Activated B cell treated with CpG ODN at 0.5 μM for 24 hours (primary cell): ENCODE measurements at regions of chr1 and their contacts with region 1.

Region 1: GRCh38 chr1:224329842-224330753 is at the start of gene NVL:
- DNase-seq: peak; percentile 79
- ATAC-seq: peak; percentile 84
- H3K4me3 Mint-ChIP-seq: peak within 1 kb of the TSS; percentile 91
- H3K27ac Mint-ChIP-seq: peak within 1 kb of the TSS; percentile 99
- H3K4me1 Mint-ChIP-seq: peaks cover 46% of the 10 kb centered on the region
- H3K27me3 Mint-ChIP-seq: no peaks in the 10 kb centered on the region
- CTCF ChIP-seq: no peak
- total RNA-seq, gene NVL: 43.7 and 44.4 TPM in 2 replicates

Region 2: DNA sequence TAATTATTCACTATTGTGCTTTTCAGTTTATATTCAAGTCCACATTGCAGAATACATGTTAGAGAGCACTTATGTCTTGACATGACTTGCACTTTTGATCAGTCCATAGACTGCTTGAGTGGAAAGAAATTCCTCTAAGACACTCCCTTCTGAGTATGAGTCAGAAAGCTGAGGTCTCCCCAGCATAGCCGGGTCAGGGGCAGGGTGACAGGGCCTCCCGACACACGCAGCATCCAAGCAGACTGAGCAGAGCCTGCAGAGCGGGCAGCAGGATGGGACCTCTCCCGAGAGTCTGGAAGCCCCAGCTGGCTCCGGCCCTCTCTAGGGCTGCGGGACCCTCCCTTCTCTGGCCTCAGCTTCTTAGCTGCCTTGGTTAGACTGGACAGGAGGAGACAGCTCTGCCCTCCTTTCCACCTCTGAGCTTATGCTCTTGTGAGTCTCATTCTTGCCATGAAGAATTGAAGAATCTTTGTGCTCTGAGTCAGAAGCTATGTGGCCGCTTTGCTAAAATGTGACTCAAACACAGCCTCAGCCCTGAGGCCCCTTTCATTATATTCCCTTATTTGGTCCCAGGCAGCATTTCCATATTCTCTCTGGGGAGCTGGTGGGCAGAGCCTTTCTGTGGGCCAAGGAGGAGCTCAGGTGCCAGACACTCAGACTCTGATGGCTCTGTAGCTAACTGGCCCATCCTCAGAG is 629.0 kb before region 1 on chr1:
- CTCF ChIA-PET with region 1: interaction called, 4 read pairs
- POLR2A ChIA-PET with region 1: no interaction called
- intact Hi-C with region 1: loop called (anchors 1 kb)
- DNase-seq: no peak
- ATAC-seq: no peak
- H3K4me3 Mint-ChIP-seq: no peak overlapping the region
- H3K27ac Mint-ChIP-seq: no peak overlapping the region
- H3K4me1 Mint-ChIP-seq: peaks cover 9% of the 10 kb centered on the region
- H3K27me3 Mint-ChIP-seq: peaks cover 13% of the 10 kb centered on the region
- CTCF ChIP-seq: no peak

Region 3: DNA sequence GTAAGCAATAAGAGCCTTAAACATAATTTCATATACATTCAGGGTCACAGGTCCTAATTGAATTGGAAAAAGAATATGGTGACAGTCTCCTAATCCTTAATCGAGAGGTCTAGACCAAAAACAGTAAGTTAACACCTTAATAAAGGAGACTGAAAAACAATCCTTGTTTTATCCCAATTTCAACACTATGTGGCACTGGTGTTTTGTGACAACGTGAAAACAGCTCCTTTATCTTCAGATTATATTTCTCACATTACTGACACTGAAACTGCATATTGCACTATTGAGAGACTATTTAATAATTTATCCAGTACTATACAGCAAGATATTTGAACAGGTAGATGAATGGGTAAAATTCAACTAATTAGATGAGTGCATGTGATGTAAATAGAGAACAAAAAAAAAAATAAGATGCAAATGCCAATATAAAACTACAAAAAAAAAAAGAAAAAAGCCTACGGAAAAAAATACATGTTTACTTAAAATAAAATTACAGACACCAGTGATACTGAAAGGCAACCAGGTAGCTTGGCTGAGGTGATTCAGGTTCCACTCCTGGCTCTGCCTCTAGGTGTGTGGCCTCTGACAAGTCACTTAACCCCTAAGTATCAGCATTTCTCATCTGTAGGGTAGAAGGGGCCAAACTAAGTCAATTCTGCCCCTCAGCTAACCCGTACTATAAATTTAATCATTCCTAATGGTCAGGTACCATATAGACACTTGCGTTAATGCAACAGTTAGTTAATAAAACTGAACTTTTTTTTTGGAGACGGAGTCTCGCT is 518.3 kb before region 1 on chr1:
- CTCF ChIA-PET with region 1: interaction called, 5 read pairs
- POLR2A ChIA-PET with region 1: no interaction called
- intact Hi-C with region 1: loop called (anchors 1 kb)
- DNase-seq: no peak
- ATAC-seq: peak; percentile 42
- H3K4me3 Mint-ChIP-seq: no peak overlapping the region
- H3K27ac Mint-ChIP-seq: no peak overlapping the region
- H3K4me1 Mint-ChIP-seq: peaks cover 13% of the 10 kb centered on the region
- H3K27me3 Mint-ChIP-seq: no peaks in the 10 kb centered on the region
- CTCF ChIP-seq: no peak

Region 4: DNA sequence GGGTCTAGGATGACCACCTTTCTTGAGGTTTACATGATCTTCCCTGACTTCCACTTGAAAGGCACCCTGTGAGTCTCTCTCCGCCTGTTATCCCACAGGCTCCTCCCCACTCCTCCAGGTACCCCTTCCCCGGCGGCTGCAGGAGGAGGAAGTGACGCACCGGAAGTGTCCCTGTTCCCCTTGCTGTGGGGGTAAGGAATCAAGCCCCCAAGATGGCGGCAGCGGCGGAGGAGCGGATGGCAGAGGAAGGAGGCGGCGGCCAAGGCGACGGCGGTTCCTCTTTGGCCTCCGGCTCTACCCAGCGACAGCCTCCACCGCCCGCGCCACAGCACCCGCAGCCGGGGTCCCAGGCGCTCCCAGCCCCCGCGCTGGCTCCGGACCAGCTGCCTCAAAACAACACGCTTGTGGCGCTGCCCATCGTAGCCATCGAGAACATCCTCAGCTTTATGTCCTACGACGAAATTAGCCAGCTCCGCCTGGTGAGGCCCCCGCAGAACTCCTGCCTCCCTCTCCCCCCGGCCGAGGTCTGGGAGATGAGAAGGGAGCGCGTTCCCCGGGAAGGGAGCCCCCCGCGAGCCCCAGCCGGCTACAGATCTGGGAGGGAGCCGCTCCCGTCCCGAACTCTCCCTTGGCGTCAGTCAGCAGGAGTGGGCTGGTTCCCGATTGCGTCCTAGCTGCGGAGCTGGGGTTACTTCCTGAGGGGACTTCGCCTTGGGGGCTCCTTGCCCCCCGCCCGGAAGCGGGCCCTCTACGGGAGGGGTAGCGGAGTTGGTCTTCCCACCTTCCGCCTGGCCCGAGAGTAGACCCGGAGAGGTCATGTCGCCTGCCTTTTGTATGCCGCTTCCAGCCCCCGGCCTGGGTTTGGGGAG is 215.9 kb before region 1 on chr1 and contains the start of gene FBXO28:
- CTCF ChIA-PET with region 1: interaction called, 55 read pairs
- POLR2A ChIA-PET with region 1: interaction called, 9 read pairs
- intact Hi-C with region 1: loop called (anchors 1 kb)
- DNase-seq: peak; percentile 84
- ATAC-seq: peak; percentile 95
- H3K4me3 Mint-ChIP-seq: peak within 1 kb of the TSS; percentile 92
- H3K27ac Mint-ChIP-seq: peak within 1 kb of the TSS; percentile 94
- H3K4me1 Mint-ChIP-seq: peaks cover 28% of the 10 kb centered on the region
- H3K27me3 Mint-ChIP-seq: peaks cover 4% of the 10 kb centered on the region
- CTCF ChIP-seq: no peak
- total RNA-seq, gene FBXO28: 27.5 and 30.4 TPM in 2 replicates

Region 5: DNA sequence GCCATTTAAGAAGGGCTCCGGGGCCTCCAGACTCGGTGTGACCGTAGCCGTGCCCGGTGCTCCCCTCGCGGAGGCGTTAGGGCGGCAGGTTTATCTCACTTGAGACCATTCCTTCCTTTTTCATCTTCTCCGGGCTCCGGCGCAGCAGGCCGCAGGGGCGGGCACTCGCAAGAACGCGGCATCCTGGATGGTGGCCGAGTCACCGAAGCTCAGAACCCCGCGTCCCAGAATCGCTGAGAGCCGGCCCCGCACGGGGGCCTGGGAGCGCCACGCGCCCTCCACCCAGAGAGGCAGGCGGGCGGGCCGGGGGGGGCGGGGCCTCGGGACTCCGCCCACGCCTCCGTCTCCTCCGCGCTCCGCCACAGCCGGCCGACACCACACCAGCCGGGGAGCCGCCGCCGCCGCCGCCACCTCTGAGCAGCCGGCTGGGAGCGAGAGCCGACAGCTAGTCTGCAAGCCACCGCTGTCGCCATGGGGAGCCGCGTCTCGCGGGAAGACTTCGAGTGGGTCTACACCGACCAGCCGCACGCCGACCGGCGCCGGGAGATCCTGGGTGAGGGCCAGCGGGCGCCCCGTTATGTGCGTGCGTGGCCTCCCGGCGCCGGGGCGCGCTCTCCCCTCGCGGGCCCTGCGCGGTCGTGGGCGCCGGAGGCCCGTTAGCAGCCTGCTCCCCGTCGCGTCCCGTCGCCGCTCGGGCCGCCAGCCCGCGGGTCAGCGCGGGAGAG is 147.1 kb before region 1 on chr1 and contains the start of gene DEGS1:
- CTCF ChIA-PET with region 1: no interaction called
- POLR2A ChIA-PET with region 1: interaction called, 14 read pairs
- intact Hi-C with region 1: loop called (anchors 1 kb)
- DNase-seq: peak; percentile 83
- ATAC-seq: peak; percentile 80
- H3K4me3 Mint-ChIP-seq: peak within 1 kb of the TSS; percentile 90
- H3K27ac Mint-ChIP-seq: peak within 1 kb of the TSS; percentile 91
- H3K4me1 Mint-ChIP-seq: peaks cover 58% of the 10 kb centered on the region
- H3K27me3 Mint-ChIP-seq: no peaks in the 10 kb centered on the region
- CTCF ChIP-seq: no peak
- total RNA-seq, gene DEGS1: 55.5 and 55.9 TPM in 2 replicates

Region 6: DNA sequence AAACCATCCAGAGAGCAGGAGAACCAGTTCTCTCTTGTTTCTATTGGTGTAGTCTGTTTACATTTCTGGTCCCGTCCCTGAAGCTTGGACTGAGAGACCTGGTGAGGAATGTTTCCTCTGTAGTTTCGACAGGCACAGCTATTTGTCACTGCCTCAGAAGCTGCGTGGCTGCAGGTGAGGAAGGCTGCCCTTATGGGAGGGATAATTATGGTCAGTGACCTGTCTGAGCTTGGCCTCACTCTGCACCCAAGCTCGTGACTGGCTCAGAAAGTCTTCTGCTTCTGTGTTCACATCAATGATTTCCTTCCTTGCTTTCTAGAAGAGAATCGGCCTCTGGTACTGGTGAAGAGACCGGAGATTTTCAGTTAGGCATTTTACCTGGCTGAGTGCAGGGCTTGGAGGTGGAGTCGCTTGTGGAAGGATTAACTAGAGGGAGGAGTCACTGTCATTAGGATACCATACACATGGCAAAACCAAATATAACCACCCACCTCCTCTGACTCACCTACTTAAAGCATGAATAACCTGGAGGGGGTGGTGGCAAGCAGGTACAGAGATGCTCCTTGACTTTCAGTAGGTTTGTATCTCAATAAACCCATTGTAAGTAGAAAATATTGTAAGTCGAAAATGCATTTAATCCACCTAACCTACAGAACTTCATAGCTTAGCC is 124.4 kb after region 1 on chr1:
- CTCF ChIA-PET with region 1: interaction called, 3 read pairs
- POLR2A ChIA-PET with region 1: no interaction called
- intact Hi-C with region 1: loop called (anchors 1 kb)
- DNase-seq: no peak
- ATAC-seq: no peak
- H3K4me3 Mint-ChIP-seq: no peak overlapping the region
- H3K27ac Mint-ChIP-seq: no peak overlapping the region
- H3K4me1 Mint-ChIP-seq: peaks cover 13% of the 10 kb centered on the region
- H3K27me3 Mint-ChIP-seq: no peaks in the 10 kb centered on the region
- CTCF ChIP-seq: no peak